HEK293 (cell line): ENCODE measurements at regions of chr10 and their contacts with region 1.

Region 1: GRCh38 chr10:120735773-120736371 is 115.3 kb upstream of the WDR11 start:
- H3K4me3 ChIP-seq: no peak overlapping the region
- H3K27ac ChIP-seq: no peak overlapping the region
- H3K4me1 ChIP-seq: no peaks in the 10 kb centered on the region
- CTCF ChIP-seq: no peak

Region 2: GRCh38 chr10:120221873-120222485 is 513.9 kb before region 1 on chr10:
- CTCF ChIA-PET with region 1: interaction called, 13 read pairs
- POLR2A ChIA-PET with region 1: no interaction called
- H3K4me3 ChIP-seq: no peak overlapping the region
- H3K27ac ChIP-seq: no peak overlapping the region
- H3K4me1 ChIP-seq: no peaks in the 10 kb centered on the region
- CTCF ChIP-seq: peak; percentile 46; the same call in 1 of the 2 replicates

Region 3: DNA sequence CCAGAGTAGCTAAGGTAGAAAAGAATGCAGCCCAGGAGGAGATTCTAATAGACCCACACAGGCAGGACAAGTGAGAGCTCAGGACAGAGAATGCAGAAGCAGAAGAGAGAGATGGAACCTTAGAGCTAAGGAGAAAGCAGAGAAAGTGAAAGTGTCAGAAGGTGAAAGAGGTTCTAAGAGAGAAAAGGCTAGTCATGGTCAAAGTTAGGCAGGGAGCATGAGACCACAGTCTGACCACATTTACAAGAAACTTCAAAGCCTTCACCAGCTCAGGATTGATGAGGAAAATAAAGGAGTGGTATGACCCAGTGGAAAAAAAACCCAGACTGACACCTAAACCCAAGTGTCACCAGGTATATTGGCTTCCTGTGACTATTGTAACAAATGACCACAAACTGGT is 16.5 kb before region 1 on chr10:
- CTCF ChIA-PET with region 1: interaction called, 11 read pairs
- POLR2A ChIA-PET with region 1: no interaction called
- H3K4me3 ChIP-seq: no peak overlapping the region
- H3K27ac ChIP-seq: no peak overlapping the region
- H3K4me1 ChIP-seq: no peaks in the 10 kb centered on the region
- CTCF ChIP-seq: no peak

Region 4: DNA sequence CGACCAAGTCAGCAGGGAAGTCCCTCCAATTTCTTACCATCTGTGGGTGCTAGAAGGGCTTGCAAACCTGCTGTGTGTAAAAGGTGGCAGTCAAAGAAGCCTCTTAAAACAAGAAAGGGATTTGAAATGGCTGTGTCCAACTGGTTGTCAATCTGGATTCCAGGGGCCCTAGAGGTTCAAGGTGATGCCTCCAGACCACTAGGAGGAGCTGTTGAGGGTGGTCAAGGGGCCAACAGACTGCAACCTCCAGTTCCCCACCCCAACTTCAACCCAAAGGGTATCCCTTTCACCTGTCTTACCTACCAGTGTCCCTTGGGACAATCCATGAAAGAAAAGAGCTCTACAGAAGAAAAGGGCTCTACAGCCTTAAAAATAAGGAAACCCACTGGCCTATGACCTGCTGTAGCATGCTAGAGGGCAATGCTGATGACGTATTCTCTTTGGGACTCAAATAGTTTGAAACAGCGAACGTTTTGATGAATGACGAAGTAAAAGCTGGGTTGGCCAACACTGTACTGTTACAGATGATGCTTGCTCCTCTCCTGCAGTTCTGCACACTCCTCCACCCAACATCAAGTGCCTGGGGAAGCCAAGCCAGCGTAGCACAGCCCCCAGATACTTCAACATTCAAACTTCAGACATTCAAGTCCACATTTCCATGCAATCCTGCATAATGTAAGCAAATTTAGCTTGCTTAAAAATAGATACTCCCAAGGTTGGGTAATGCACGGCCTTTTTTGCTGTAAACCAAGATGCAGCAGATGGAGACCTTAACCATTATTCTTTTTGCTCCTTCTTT is 69.3 kb after region 1 on chr10:
- CTCF ChIA-PET with region 1: no interaction called
- POLR2A ChIA-PET with region 1: no interaction called
- H3K4me3 ChIP-seq: no peak overlapping the region
- H3K27ac ChIP-seq: no peak overlapping the region
- H3K4me1 ChIP-seq: peaks cover 2% of the 10 kb centered on the region; the same call in 1 of the 2 replicates
- CTCF ChIP-seq: no peak